ENCODE measurements at regions of chr12 and their contacts with region 1.

Region 1: GRCh38 chr12:127381048-127381668 is 885.8 kb upstream of the TMEM132C start:
- DNase-seq: peak in 11 of 35 experiments; percentile 0 to 25 (median 7)
- ATAC-seq: peak in 1 of 4 experiments; percentile 41
- H3K4me3 ChIP-seq: no peak overlapping the region
- H3K4me3 Mint-ChIP-seq: no peak overlapping the region
- H3K27ac ChIP-seq: no peak overlapping the region
- H3K27ac Mint-ChIP-seq: no peak overlapping the region
- H3K4me1 ChIP-seq: no peaks in the 10 kb centered on the region
- H3K4me1 Mint-ChIP-seq: peaks cover 0 to 6% (median 0%) of the 10 kb centered on the region in 3 donors
- H3K27me3 ChIP-seq: peaks cover 0 to 5% of the 10 kb centered on the region in 2 experiments
- H3K27me3 Mint-ChIP-seq: peaks cover 4 to 6% of the 10 kb centered on the region in 2 donors

Region 2: DNA sequence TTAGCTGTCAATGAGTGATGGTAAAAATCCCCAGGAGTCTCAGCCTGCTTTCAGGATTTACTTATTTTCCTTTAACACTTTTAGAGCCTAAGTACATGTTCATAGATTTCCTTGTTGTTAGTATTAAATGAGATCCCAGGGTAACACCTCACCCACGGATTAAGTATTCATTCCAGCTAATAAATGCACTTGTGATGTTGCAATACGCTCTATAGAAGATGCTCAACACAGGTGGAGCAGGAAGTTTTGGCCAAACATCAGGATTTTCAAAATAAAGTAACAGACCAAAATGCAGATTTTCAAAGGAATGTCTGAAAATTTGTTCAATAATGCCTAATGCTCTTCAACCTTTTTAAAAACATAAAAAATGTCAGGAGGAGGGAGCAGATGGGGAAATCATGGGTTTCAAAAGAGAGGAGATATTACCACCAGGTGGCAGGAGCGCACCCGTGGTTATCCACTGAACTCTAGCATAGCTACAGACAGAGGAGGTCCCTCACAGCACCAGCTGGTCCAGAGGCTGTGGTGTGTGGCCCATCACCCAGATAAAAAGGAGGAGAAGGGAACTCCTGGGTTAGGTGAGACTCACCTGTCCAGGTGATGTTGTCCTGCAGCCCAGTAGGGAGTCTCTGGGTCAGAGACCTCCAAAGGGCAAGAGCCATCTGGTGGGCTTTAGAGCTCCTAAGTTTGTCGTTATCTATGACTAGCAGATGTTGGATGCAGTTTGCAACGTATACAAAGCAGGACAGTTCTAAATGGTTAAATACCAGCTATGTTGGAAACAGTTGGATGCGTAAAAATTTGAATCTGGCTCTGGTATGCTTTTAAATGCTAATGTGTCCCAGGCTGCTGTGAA is 272.6 kb before region 1 on chr12:
- CTCF ChIA-PET with region 1: interaction called in 1 of 2 experiments, 13 read pairs
- POLR2A ChIA-PET with region 1: no interaction called
- DNase-seq: peak in 25 of 35 experiments; percentile 2 to 43 (median 17)
- ATAC-seq: peak in 1 of 4 experiments; percentile 26
- H3K4me3 ChIP-seq: no peak overlapping the region
- H3K4me3 Mint-ChIP-seq: no peak overlapping the region
- H3K27ac ChIP-seq: no peak overlapping the region
- H3K27ac Mint-ChIP-seq: no peak overlapping the region
- H3K4me1 ChIP-seq: no peaks in the 10 kb centered on the region
- H3K4me1 Mint-ChIP-seq: no peaks in the 10 kb centered on the region
- H3K27me3 ChIP-seq: no peaks in the 10 kb centered on the region
- H3K27me3 Mint-ChIP-seq: peaks cover 13 to 34% of the 10 kb centered on the region in 2 donors

Region 3: DNA sequence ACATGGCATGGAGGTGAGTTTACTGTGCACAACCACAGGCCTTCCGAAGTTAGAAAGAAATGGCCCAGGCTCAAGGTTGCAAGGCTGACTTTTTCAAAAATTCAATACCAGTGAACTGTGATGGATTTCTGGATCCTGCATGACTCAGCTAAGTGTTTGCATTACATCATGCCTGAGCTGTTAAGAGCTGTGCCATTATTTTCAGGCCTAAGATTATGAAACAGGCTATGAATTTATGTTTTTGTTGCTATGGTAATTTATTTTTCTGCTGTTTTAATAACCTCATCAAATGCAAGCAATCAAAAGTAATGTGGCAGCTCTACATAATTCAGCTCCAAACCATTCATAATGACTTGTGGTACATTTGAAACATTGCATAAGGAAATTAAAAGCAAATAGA is 428.1 kb after region 1 on chr12:
- CTCF ChIA-PET with region 1: no interaction called
- POLR2A ChIA-PET with region 1: no interaction called
- DNase-seq: no peak
- ATAC-seq: no peak
- H3K4me3 ChIP-seq: no peak overlapping the region
- H3K4me3 Mint-ChIP-seq: no peak overlapping the region
- H3K27ac ChIP-seq: no peak overlapping the region
- H3K27ac Mint-ChIP-seq: no peak overlapping the region
- H3K4me1 ChIP-seq: no peaks in the 10 kb centered on the region
- H3K4me1 Mint-ChIP-seq: no peaks in the 10 kb centered on the region
- H3K27me3 ChIP-seq: no peaks in the 10 kb centered on the region
- H3K27me3 Mint-ChIP-seq: no peaks in the 10 kb centered on the region